CD4-positive, alpha-beta T cell (primary cell): ENCODE measurements at regions of chr20 and their contacts with region 1.

Region 1: DNA sequence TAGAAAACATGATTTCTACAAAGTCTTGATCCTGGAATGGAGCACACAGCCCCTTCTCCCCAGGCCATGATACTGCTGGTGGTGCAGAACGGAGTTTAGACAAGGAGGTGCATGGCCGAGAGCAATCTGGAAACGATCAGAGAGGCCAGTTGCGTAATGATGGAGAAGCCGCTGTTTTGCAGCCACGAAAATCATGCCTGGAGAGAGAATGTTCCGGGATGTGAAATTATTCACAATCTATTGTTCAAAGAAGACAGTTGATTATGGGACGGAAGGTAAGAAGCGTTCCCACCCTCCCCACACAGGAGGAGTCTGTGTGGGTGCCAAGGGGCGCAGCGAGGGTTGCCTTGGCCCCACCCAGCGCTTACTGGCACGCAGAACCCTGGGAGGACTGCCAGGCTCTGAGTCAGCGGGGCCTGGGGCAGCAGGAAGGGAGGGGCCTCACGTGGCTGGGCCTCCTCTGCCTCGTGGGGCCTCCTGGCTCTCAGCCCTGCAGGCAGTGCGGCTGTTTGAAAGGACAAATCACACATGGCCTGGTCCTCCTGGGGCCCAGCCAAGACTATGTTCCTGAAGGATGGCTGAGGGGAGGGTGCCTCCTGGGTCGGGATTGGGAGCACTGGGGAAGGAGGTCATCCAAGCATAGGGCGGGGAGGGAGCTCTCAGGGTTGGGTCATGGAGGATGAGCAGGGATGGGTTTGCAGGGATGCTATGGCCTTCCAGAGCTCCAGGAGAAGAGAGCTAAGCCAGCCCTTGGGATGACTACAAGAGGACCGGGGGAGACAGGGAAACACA is 8.7 kb upstream of the AP5S1 start:
- DNase-seq: peak; percentile 80 to 98 (median 96)
- ATAC-seq: peak; percentile 91
- H3K4me3 ChIP-seq: peak overlapping the region; percentile 57
- H3K4me3 Mint-ChIP-seq: peak overlapping the region; percentile 77
- H3K27ac ChIP-seq: peak overlapping the region; percentile 82 to 97
- H3K27ac Mint-ChIP-seq: peak overlapping the region; percentile 98
- H3K4me1 ChIP-seq: peaks cover 90% of the 10 kb centered on the region
- H3K4me1 Mint-ChIP-seq: peaks cover 81% of the 10 kb centered on the region
- H3K27me3 ChIP-seq: no peaks in the 10 kb centered on the region
- H3K27me3 Mint-ChIP-seq: no peaks in the 10 kb centered on the region
- CTCF ChIP-seq: no peak

Region 2: GRCh38 chr20:3795511-3796468 is 15.9 kb before region 1 on chr20 and contains the start of gene CDC25B:
- CTCF ChIA-PET with region 1: interaction called, 6 read pairs
- POLR2A ChIA-PET with region 1: interaction called, 89 read pairs
- intact Hi-C with region 1: loop called (anchors 1 kb)
- DNase-seq: peak; percentile 82 to 95 (median 89)
- ATAC-seq: peak; percentile 81
- H3K4me3 ChIP-seq: peak within 1 kb of the TSS; percentile 96
- H3K4me3 Mint-ChIP-seq: peak within 1 kb of the TSS; percentile 100
- H3K27ac ChIP-seq: peak within 1 kb of the TSS; percentile 90 to 95
- H3K27ac Mint-ChIP-seq: peak within 1 kb of the TSS; percentile 95
- H3K4me1 ChIP-seq: peaks cover 50% of the 10 kb centered on the region
- H3K4me1 Mint-ChIP-seq: peaks cover 45% of the 10 kb centered on the region
- H3K27me3 ChIP-seq: no peaks in the 10 kb centered on the region
- H3K27me3 Mint-ChIP-seq: no peaks in the 10 kb centered on the region
- CTCF ChIP-seq: peak; percentile 58
- total RNA-seq, gene CDC25B: 144 TPM